ENCODE measurements at regions of chr14 and their contacts with region 1.

Region 1: DNA sequence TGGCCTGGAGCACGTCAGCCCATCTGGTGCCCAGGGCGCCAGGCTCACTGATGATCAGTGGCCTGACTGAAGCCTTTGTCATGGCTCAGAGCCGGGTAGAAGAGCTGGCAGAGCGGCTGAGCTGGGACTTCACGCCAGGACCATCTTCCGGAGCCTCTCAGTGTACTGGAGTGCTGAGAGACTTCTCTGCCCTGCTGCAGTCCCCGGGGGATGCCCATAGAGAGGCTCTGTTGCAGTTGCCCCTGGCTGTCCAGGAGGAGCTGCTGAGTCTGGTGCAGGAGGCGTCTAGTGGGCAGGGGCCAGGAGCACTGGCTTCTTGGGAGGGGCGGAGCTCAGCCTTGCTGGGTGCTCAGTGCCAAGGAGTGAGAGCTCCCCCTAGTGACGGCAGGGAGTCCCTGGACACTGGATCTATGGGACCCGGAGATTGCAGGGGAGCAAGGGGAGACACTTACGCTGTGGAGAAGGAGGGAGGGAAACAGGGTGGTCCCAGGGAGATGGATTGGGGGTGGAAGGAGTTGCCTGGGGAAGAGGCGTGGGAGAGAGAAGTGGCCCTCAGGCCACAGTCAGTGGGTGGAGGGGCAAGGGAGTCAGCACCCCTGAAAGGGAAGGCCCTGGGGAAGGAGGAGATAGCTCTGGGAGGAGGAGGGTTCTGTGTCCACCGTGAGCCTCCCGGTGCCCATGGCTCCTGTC is 2.0 kb downstream of the KHNYN start:
- DNase-seq: peak; percentile 95 to 96
- ATAC-seq: peak; percentile 85
- H3K4me3 ChIP-seq: no peak overlapping the region
- H3K27ac ChIP-seq: no peak overlapping the region
- H3K4me1 ChIP-seq: no peaks in the 10 kb centered on the region
- H3K27me3 ChIP-seq: no peaks in the 10 kb centered on the region

Region 2: DNA sequence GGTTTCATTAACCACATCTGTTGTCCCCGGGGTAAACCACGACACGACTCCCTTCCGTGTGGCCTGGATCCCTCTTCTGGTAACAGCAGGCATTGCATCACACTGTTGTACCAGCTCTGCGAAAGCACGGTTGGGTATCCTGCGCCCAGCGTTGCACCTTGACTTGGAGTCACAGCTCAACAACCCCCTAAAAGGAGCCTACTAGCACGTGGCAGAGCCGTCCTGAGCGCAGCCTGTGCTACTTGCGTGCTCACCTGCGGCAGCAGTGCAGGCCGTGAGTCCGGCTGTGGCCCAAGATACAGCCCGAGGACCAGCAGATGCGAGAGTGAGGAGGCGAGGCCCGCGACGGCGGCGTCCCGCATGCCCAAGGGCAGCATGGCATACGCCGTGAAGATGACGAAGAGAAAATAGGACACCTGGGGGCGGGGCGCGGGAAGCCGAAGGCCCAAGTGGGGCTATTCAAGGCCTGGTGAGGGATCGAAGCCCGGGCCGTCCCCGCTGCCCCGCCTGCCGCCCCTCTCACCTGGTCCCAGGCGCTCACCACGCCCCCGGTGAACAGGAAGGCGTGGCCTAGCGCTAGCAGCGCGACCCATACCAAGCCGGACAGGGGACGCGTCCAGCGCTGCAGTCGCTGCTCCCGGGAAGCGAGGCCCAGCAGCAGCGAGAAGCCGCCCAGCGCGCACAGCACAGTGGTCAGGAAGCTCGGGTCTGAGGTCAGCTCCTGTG is 99.3 kb before region 1 on chr14:
- intact Hi-C with region 1: loop called (anchors 2 kb)
- DNase-seq: peak; percentile 82 to 84
- ATAC-seq: peak; percentile 73
- H3K4me3 ChIP-seq: no peak overlapping the region
- H3K27ac ChIP-seq: no peak overlapping the region
- H3K4me1 ChIP-seq: no peaks in the 10 kb centered on the region
- H3K27me3 ChIP-seq: no peaks in the 10 kb centered on the region

Region 3: DNA sequence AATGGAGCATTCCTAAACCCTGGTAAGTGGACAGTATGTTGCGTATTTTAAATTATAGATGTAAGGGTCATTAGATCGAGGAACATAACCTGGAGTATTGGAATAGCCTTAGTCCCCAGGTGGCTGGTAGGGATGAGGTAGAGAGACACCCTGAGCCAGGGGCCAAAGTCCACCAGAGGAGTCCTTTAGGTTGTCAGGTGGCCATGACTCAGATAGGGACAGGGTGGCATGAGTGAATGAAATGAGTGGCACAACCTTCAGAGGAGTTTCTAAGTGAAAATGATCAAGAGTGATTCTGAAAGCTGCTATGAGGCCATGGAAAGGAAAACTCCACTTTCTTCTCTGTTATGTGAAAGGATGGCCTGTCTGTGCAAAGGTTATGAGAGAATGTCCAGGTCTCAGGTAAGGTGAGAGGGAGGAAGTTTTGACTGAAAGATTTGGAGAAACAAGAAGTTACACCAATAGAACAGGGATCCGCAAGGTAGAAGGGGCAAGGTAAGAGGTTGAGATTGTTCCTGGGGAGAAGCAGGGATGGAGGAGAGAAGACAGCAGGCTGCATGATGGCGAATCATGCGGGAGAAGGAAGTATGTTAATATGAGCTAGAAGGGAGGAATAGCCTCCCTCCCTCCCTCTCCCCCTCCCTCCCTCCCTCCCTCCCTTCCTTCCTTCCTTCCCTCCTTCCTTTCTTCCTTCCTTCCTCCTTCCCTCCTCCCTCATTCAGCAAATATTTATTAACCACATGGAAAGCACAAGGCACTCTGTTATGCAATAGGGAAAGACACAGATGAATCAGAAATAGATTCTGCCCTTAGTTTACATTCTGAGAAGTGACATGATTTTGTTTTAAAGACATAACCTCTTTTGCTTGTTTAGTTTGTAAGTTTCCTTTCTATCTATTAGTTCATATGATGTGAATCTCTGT is 77.9 kb before region 1 on chr14:
- intact Hi-C with region 1: no loop called
- DNase-seq: no peak
- ATAC-seq: no peak
- H3K4me3 ChIP-seq: no peak overlapping the region
- H3K27ac ChIP-seq: no peak overlapping the region
- H3K4me1 ChIP-seq: no peaks in the 10 kb centered on the region
- H3K27me3 ChIP-seq: no peaks in the 10 kb centered on the region

Measured in aorta (tissue), 5 donors.